ENCODE measurements at regions of chr19 and their contacts with region 1.

Region 1: GRCh38 chr19:49255674-49256073 is 69.3 kb downstream of the SLC6A16 start:
- DNase-seq: no peak
- H3K4me3 Mint-ChIP-seq: no peak overlapping the region
- H3K27ac Mint-ChIP-seq: no peak overlapping the region
- H3K4me1 Mint-ChIP-seq: no peaks in the 10 kb centered on the region
- H3K27me3 Mint-ChIP-seq: peaks cover 33% of the 10 kb centered on the region

Region 2: GRCh38 chr19:49272184-49272583 is 16.5 kb after region 1 on chr19:
- CTCF ChIA-PET with region 1: interaction called, 10 read pairs
- DNase-seq: no peak
- H3K4me3 Mint-ChIP-seq: no peak overlapping the region
- H3K27ac Mint-ChIP-seq: no peak overlapping the region
- H3K4me1 Mint-ChIP-seq: no peaks in the 10 kb centered on the region
- H3K27me3 Mint-ChIP-seq: peaks cover 7% of the 10 kb centered on the region

Measured in activated naive CD4-positive, alpha-beta T cell treated with anti-CD3 and anti-CD28 coated beads, Interleukin-2, amount 10 ng/mL, durations not matched to agents 7 days and 5 days (primary cell).